Activated B cell treated with CpG ODN at 0.5 μM for 24 hours (primary cell): ENCODE measurements at regions of chr13 and their contacts with region 1.

Region 1: DNA sequence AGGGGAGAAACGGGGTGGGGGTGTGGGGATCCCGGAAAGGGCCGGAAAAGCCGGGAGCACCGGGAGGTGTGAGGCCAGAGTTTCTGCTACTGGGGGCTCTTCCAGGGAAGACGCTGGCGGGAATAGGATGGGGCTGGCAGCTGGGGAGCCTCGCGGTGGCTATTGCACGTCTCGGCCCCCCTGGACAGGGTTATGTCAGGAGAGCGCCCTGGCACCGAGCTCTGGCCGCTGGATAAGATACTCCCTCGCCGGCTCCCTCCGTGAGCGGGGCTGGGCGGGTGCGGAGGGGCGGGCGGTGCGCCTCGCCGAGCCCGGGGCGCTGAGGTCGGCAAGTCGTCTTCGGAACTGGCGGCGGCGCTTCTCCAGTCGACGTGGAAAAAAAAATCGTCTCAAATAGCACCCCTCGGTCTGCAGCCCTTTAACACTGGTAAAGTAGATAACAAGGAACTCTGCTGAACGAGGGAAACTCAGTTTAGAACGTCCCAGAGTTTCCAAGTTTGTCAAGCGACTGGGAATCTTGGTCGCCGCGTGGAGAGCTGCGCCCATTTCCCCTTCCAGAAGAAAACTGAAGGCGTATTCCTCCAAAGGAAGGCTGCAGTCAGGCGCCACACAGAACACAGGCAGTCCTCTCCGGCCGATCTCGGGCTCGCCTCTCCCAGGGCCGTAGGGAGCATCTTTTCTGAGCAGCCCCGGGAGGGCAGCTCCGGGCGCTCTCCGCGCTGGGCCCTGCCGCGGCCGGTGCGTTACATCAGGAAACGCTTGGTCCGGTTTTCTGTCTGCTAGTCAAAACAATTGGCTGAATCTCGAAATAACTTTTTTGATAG is 115.1 kb downstream of the KCNRG start:
- DNase-seq: peak; percentile 54
- ATAC-seq: peak; percentile 36
- H3K4me3 Mint-ChIP-seq: peak overlapping the region; percentile 89
- H3K27ac Mint-ChIP-seq: peak overlapping the region; percentile 95
- H3K4me1 Mint-ChIP-seq: peaks cover 60% of the 10 kb centered on the region
- H3K27me3 Mint-ChIP-seq: peaks cover 16% of the 10 kb centered on the region
- CTCF ChIP-seq: no peak

Region 2: GRCh38 chr13:48542581-48543341 is 1587.6 kb before region 1 on chr13:
- CTCF ChIA-PET with region 1: no interaction called
- POLR2A ChIA-PET with region 1: no interaction called
- intact Hi-C with region 1: no loop called
- DNase-seq: no peak
- ATAC-seq: no peak
- H3K4me3 Mint-ChIP-seq: no peak overlapping the region
- H3K27ac Mint-ChIP-seq: no peak overlapping the region
- H3K4me1 Mint-ChIP-seq: no peaks in the 10 kb centered on the region
- H3K27me3 Mint-ChIP-seq: peaks cover 63% of the 10 kb centered on the region
- CTCF ChIP-seq: no peak

Region 3: GRCh38 chr13:50158385-50159165 is 28.2 kb after region 1 on chr13:
- CTCF ChIA-PET with region 1: no interaction called
- POLR2A ChIA-PET with region 1: interaction called, 34 read pairs
- intact Hi-C with region 1: loop called (anchors 1 kb)
- DNase-seq: no peak
- ATAC-seq: peak; percentile 64
- H3K4me3 Mint-ChIP-seq: peak overlapping the region; percentile 64
- H3K27ac Mint-ChIP-seq: peak overlapping the region; percentile 78
- H3K4me1 Mint-ChIP-seq: peaks cover 31% of the 10 kb centered on the region
- H3K27me3 Mint-ChIP-seq: no peaks in the 10 kb centered on the region
- CTCF ChIP-seq: no peak

Region 4: GRCh38 chr13:50167224-50167947 is 37.1 kb after region 1 on chr13:
- CTCF ChIA-PET with region 1: no interaction called
- POLR2A ChIA-PET with region 1: interaction called, 31 read pairs
- intact Hi-C with region 1: no loop called
- DNase-seq: no peak
- ATAC-seq: peak; percentile 87
- H3K4me3 Mint-ChIP-seq: no peak overlapping the region
- H3K27ac Mint-ChIP-seq: peak overlapping the region; percentile 66
- H3K4me1 Mint-ChIP-seq: peaks cover 12% of the 10 kb centered on the region
- H3K27me3 Mint-ChIP-seq: no peaks in the 10 kb centered on the region
- CTCF ChIP-seq: no peak

Region 5: GRCh38 chr13:50222569-50223332 is 92.4 kb after region 1 on chr13:
- CTCF ChIA-PET with region 1: no interaction called
- POLR2A ChIA-PET with region 1: interaction called, 65 read pairs
- intact Hi-C with region 1: loop called (anchors 5 kb)
- DNase-seq: no peak
- ATAC-seq: peak; percentile 31
- H3K4me3 Mint-ChIP-seq: no peak overlapping the region
- H3K27ac Mint-ChIP-seq: peak overlapping the region; percentile 10
- H3K4me1 Mint-ChIP-seq: peaks cover 34% of the 10 kb centered on the region
- H3K27me3 Mint-ChIP-seq: no peaks in the 10 kb centered on the region
- CTCF ChIP-seq: no peak

Region 6: GRCh38 chr13:50236898-50237318 is 106.6 kb after region 1 on chr13:
- CTCF ChIA-PET with region 1: interaction called, 7 read pairs
- POLR2A ChIA-PET with region 1: interaction called, 242 read pairs
- intact Hi-C with region 1: loop called (anchors 1 kb)
- DNase-seq: no peak
- ATAC-seq: peak; percentile 90
- H3K4me3 Mint-ChIP-seq: peak overlapping the region; percentile 55
- H3K27ac Mint-ChIP-seq: peak overlapping the region; percentile 92
- H3K4me1 Mint-ChIP-seq: peaks cover 53% of the 10 kb centered on the region
- H3K27me3 Mint-ChIP-seq: no peaks in the 10 kb centered on the region
- CTCF ChIP-seq: no peak

Region 7: DNA sequence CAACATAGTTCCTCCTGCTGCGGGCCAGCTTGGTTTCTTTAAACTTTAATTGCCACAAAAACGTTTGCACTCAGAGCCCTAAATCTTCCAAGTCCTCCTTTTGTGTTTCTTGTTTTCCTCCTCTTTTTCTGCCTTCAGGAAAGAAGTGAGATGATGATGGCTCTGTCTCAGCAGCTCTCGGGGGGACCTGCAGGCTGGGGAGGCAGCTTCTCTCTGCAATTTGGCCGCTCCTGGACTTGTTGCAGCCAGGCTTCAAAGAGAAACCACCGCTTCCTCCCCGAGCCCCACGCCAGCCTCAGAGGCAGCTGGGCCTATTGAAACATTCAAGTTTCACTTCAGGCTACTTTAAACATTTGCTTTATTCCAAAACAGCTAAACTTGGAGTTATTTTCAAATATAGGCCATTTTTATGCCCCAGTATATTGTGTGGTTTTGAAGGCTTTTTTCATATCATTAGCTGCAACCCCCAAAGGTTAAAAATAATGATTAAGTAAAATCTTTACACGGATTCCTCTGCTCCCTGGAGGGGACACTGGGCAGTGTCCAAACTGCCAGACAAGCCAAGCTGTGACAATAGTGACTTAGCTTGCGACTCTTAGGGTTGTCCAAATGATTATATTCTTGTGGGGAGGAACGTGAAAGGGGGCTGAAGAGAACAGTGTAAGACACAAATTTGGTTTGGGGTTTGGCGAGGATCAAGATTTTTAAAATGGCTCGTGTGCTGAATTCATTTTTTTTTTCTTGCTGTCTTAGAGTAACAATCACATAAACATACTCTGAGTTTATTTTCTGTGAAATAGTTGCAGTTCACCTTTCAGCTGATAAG is 382.4 kb after region 1 on chr13:
- CTCF ChIA-PET with region 1: interaction called, 4 read pairs
- POLR2A ChIA-PET with region 1: interaction called, 31 read pairs
- intact Hi-C with region 1: loop called (anchors 2 kb)
- DNase-seq: peak; percentile 40
- ATAC-seq: peak; percentile 81
- H3K4me3 Mint-ChIP-seq: no peak overlapping the region
- H3K27ac Mint-ChIP-seq: no peak overlapping the region
- H3K4me1 Mint-ChIP-seq: peaks cover 3% of the 10 kb centered on the region
- H3K27me3 Mint-ChIP-seq: no peaks in the 10 kb centered on the region
- CTCF ChIP-seq: no peak

Region 8: GRCh38 chr13:51291341-51291740 is 1161.0 kb after region 1 on chr13:
- CTCF ChIA-PET with region 1: no interaction called
- POLR2A ChIA-PET with region 1: no interaction called
- intact Hi-C with region 1: no loop called
- DNase-seq: no peak
- ATAC-seq: no peak
- H3K4me3 Mint-ChIP-seq: no peak overlapping the region
- H3K27ac Mint-ChIP-seq: no peak overlapping the region
- H3K4me1 Mint-ChIP-seq: peaks cover under 1% of the 10 kb centered on the region
- H3K27me3 Mint-ChIP-seq: peaks cover 3% of the 10 kb centered on the region
- CTCF ChIP-seq: no peak